PC-9 (cell line): ENCODE measurements at regions of chr4 and their contacts with region 1.

Region 1: DNA sequence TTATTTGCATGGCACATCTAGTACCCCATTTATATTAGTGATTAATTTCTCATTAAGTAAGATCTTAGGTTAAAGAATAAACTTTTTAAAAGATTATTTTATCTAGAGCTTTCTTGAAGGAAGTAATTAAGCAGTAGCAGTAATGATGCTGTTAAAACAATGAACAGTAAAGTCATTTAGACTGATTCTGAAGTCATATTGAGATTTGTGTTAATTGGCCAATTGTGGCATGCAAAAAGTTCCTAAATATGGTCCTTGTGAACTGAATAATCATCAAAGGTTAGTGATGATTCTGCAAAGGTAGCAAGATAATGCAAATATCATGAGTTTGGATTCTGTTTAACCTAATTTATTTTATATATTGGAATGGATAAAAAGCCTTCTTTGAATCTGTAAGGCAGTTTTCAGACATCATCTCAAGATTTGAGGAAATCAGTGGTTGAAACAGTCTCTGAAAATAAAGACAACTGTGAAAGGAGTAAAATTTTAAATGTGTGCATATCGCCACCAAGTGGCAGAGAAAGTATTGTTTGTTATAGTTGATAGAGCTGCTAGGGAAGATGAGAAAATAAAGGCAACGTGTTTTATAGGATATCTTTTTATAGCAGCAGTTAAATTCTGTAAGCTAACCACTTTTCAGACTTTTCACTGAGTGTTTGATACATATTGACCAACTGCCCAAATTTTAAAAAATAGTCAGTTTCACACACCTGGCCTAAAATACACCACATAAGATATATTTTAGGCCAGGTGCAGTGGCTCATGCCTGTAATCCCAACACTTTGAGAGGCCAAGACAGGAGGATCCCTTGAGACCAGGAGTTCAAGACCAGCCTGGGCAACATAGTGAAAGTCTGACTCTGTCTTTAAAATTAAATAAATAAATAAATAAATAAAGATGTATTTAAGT is 79.6 kb downstream of the CCKAR start:
- DNase-seq: peak; percentile 5 to 39
- H3K4me3 ChIP-seq: no peak overlapping the region
- H3K27ac ChIP-seq: no peak overlapping the region
- H3K4me1 ChIP-seq: no peaks in the 10 kb centered on the region
- H3K27me3 ChIP-seq: no peaks in the 10 kb centered on the region
- CTCF ChIP-seq: peak; percentile 74

Region 2: DNA sequence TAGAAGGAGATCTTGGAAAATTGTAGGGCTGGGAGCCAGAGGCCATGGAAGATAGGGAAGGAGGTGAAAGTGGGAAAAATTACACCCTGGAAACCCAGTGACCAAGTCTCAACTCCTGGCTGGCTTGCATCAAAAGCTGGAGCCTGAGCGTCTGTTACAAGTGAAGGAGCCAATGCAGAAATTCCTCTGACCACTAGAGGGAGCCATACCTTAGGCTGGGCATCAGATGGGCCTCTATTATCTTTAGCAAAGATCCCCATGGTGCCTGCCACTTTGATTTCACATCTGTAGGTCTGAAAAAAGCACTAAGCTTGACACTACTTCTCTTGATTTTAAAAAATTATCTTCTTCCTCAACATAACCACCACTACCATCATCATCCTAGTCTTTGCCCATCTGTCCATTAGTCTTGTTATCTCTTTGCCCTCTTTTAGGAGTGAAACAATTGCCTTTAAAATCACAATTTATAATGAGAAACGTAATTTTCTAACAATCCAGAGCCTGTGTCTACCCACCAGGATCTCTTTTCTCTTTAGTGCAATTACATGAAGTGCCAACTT is 970.6 kb before region 1 on chr4:
- CTCF ChIA-PET with region 1: no interaction called
- POLR2A ChIA-PET with region 1: no interaction called
- intact Hi-C with region 1: loop called (anchors 2 kb)
- DNase-seq: peak in 1 of 2 experiments; percentile 45
- H3K4me3 ChIP-seq: no peak overlapping the region
- H3K27ac ChIP-seq: no peak overlapping the region
- H3K4me1 ChIP-seq: no peaks in the 10 kb centered on the region
- H3K27me3 ChIP-seq: no peaks in the 10 kb centered on the region
- CTCF ChIP-seq: peak; percentile 87

Region 3: GRCh38 chr4:25993395-25994185 is 417.0 kb before region 1 on chr4:
- CTCF ChIA-PET with region 1: interaction called, 4 read pairs
- POLR2A ChIA-PET with region 1: interaction called, 12 read pairs
- intact Hi-C with region 1: loop called (anchors 2 kb)
- DNase-seq: no peak
- H3K4me3 ChIP-seq: no peak overlapping the region
- H3K27ac ChIP-seq: no peak overlapping the region
- H3K4me1 ChIP-seq: no peaks in the 10 kb centered on the region
- H3K27me3 ChIP-seq: no peaks in the 10 kb centered on the region
- CTCF ChIP-seq: peak; percentile 22; the same call in 1 of the 2 replicates

Region 4: GRCh38 chr4:26081795-26082498 is 328.7 kb before region 1 on chr4:
- CTCF ChIA-PET with region 1: no interaction called
- POLR2A ChIA-PET with region 1: no interaction called
- intact Hi-C with region 1: loop called (anchors 5 kb)
- DNase-seq: no peak
- H3K4me3 ChIP-seq: no peak overlapping the region
- H3K27ac ChIP-seq: no peak overlapping the region
- H3K4me1 ChIP-seq: peaks cover 26% of the 10 kb centered on the region
- H3K27me3 ChIP-seq: no peaks in the 10 kb centered on the region
- CTCF ChIP-seq: peak; percentile 73

Region 5: DNA sequence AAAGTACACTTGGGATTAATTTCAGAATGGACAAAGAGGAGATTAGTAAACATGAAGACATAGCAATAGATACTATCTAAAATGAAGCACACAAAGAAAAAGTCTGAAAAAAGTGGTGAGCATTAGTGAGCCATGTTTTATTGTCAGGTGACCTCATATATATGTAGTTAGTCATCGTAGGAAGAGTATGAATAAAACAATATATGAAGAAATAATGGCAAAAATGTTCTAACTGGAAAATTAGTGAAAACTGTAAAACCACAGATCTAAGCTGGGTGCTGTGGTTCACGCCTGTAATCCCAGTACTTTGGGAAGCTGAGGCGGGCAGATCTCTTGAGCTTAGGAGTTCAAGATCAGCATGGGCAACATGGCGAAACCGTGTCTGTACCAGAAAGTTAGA is 22.0 kb before region 1 on chr4:
- CTCF ChIA-PET with region 1: interaction called, 16 read pairs
- POLR2A ChIA-PET with region 1: no interaction called
- intact Hi-C with region 1: no loop called
- DNase-seq: no peak
- H3K4me3 ChIP-seq: no peak overlapping the region
- H3K27ac ChIP-seq: no peak overlapping the region
- H3K4me1 ChIP-seq: no peaks in the 10 kb centered on the region
- H3K27me3 ChIP-seq: no peaks in the 10 kb centered on the region
- CTCF ChIP-seq: no peak

Region 6: GRCh38 chr4:26648260-26648659 is 237.6 kb after region 1 on chr4:
- CTCF ChIA-PET with region 1: no interaction called
- POLR2A ChIA-PET with region 1: no interaction called
- intact Hi-C with region 1: no loop called
- DNase-seq: no peak
- H3K4me3 ChIP-seq: no peak overlapping the region
- H3K27ac ChIP-seq: no peak overlapping the region
- H3K4me1 ChIP-seq: no peaks in the 10 kb centered on the region
- H3K27me3 ChIP-seq: no peaks in the 10 kb centered on the region
- CTCF ChIP-seq: no peak

Region 7: DNA sequence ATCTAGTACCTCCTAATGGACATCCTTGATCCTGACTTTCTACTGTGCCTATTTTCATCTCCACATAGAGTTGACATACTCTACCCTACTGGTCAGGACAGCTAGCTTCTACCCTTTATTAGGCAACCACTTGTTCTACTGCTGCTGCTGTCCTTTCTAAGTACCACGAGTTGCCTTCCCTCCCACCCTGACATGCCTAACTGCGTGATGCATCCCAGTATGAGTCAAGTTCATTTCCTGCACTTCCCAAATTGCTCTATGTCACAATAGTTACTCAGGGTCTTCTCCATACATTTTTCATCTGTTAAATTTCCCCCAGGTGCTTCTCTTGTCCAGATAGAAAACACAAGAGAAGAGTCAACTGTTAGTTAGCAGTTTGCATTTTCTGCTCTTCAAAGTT is 306.7 kb after region 1 on chr4:
- CTCF ChIA-PET with region 1: no interaction called
- POLR2A ChIA-PET with region 1: no interaction called
- intact Hi-C with region 1: no loop called
- DNase-seq: no peak
- H3K4me3 ChIP-seq: no peak overlapping the region
- H3K27ac ChIP-seq: no peak overlapping the region
- H3K4me1 ChIP-seq: no peaks in the 10 kb centered on the region
- H3K27me3 ChIP-seq: no peaks in the 10 kb centered on the region
- CTCF ChIP-seq: no peak